ENCODE measurements at regions of chr1 and their contacts with region 1.

Region 1: DNA sequence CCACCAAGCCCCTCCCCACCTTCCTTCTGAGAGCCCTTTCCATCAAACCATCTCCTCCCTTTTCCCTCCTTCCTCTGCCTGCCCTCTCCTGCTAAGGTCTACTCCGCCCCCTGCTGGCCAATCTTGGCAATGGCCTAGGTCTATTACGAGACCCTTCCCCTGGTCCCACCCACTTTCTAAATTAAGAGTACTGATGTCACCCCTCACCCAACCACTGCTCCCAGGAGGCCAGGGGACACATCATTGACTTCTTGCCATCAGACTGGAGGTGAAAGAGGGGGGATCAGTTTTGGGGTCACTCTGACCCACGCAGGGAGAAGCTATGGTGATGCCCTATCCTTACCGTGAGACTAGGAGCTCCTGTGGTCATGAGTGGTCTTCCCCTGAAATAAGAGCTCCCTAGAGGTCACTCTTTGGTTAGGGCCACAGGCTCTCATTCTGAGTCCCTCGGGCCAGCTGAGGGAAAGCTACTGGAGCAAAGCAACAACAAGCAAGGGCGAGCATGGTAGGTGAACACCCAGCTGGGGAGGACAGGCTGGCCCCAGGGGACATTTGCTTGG is 34.6 kb upstream of the S100A7 start:
- DNase-seq: peak; percentile 84
- H3K4me3 Mint-ChIP-seq: no peak overlapping the region
- H3K27ac Mint-ChIP-seq: no peak overlapping the region
- H3K4me1 Mint-ChIP-seq: no peaks in the 10 kb centered on the region
- H3K27me3 Mint-ChIP-seq: peaks cover 64% of the 10 kb centered on the region

Region 2: DNA sequence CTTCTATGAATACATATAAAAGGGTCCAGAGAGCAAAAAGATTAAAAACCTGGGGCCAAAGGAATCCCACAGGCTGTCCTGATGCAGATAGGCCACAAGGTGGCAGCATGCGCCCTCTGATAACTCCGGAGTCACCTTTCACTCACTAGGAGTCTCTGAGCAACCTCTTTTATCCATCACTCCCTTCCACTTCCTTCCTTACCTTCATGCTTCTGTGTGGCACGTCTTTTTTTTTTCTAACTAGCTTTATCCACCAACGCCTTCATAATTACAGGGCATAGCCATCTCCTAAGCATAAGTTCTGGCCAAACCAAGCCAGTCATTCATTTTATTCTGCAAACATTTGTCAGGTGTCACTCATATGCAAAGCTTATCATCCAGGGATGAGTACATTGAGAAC is 142.5 kb before region 1 on chr1:
- CTCF ChIA-PET with region 1: interaction called, 172 read pairs
- DNase-seq: peak; percentile 77
- H3K4me3 Mint-ChIP-seq: no peak overlapping the region
- H3K27ac Mint-ChIP-seq: no peak overlapping the region
- H3K4me1 Mint-ChIP-seq: peaks cover 15% of the 10 kb centered on the region
- H3K27me3 Mint-ChIP-seq: peaks cover 64% of the 10 kb centered on the region

Region 3: GRCh38 chr1:153363641-153364554 is 131.2 kb before region 1 on chr1:
- CTCF ChIA-PET with region 1: interaction called, 10 read pairs
- DNase-seq: no peak
- H3K4me3 Mint-ChIP-seq: no peak overlapping the region
- H3K27ac Mint-ChIP-seq: no peak overlapping the region
- H3K4me1 Mint-ChIP-seq: no peaks in the 10 kb centered on the region
- H3K27me3 Mint-ChIP-seq: peaks cover 15% of the 10 kb centered on the region

Region 4: GRCh38 chr1:153465811-153466636 is 29.0 kb before region 1 on chr1:
- CTCF ChIA-PET with region 1: interaction called, 15 read pairs
- DNase-seq: peak; percentile 71
- H3K4me3 Mint-ChIP-seq: no peak overlapping the region
- H3K27ac Mint-ChIP-seq: no peak overlapping the region
- H3K4me1 Mint-ChIP-seq: no peaks in the 10 kb centered on the region
- H3K27me3 Mint-ChIP-seq: peaks cover 45% of the 10 kb centered on the region

Region 5: GRCh38 chr1:153505576-153505975 is 10.5 kb after region 1 on chr1:
- CTCF ChIA-PET with region 1: interaction called, 12 read pairs
- DNase-seq: no peak
- H3K4me3 Mint-ChIP-seq: no peak overlapping the region
- H3K27ac Mint-ChIP-seq: no peak overlapping the region
- H3K4me1 Mint-ChIP-seq: peaks cover under 1% of the 10 kb centered on the region
- H3K27me3 Mint-ChIP-seq: peaks cover 29% of the 10 kb centered on the region